GM12878 (cell line): ENCODE measurements at regions of chr1 and their contacts with region 1.

Region 1: GRCh38 chr1:33295450-33296081 is 25.3 kb downstream of the A3GALT2 start:
- DNase-seq: peak; percentile 64
- ATAC-seq: peak; percentile 97
- H3K4me3 ChIP-seq: no peak overlapping the region
- H3K27ac ChIP-seq: no peak overlapping the region
- H3K4me1 ChIP-seq: no peaks in the 10 kb centered on the region
- H3K27me3 ChIP-seq: no peaks in the 10 kb centered on the region
- CTCF ChIP-seq: peak; percentile 97 to 99 (median 98); a peak in 5 of 6 replicates
- EP300 ChIP-seq: no peak
- POLR2A ChIP-seq: no peak
- RAD21 ChIP-seq: peak; percentile 77

Region 2: GRCh38 chr1:33137800-33138199 is 157.8 kb before region 1 on chr1:
- CTCF ChIA-PET with region 1: interaction called, 53 read pairs
- POLR2A ChIA-PET with region 1: no interaction called
- RAD21 ChIA-PET with region 1: interaction called, 3 read pairs
- SMC1A ChIA-PET with region 1: interaction called, 5 read pairs
- in situ Hi-C with region 1: no loop called
- intact Hi-C with region 1: loop called (anchors 5 kb)
- DNase-seq: no peak
- ATAC-seq: peak; percentile 74
- H3K4me3 ChIP-seq: no peak overlapping the region
- H3K27ac ChIP-seq: no peak overlapping the region
- H3K4me1 ChIP-seq: no peaks in the 10 kb centered on the region
- H3K27me3 ChIP-seq: no peaks in the 10 kb centered on the region
- CTCF ChIP-seq: peak; percentile 48 to 68 (median 64)
- EP300 ChIP-seq: no peak
- POLR2A ChIP-seq: no peak
- RAD21 ChIP-seq: peak; percentile 54

Region 3: GRCh38 chr1:33334081-33334552 is 38.6 kb after region 1 on chr1:
- CTCF ChIA-PET with region 1: interaction called, 24 read pairs
- POLR2A ChIA-PET with region 1: interaction called, 5 read pairs
- RAD21 ChIA-PET with region 1: interaction called, 5 read pairs
- SMC1A ChIA-PET with region 1: interaction called, 3 read pairs
- in situ Hi-C with region 1: no loop called
- intact Hi-C with region 1: no loop called
- DNase-seq: no peak
- ATAC-seq: no peak
- H3K4me3 ChIP-seq: no peak overlapping the region
- H3K27ac ChIP-seq: no peak overlapping the region
- H3K4me1 ChIP-seq: peaks cover 3% of the 10 kb centered on the region
- H3K27me3 ChIP-seq: no peaks in the 10 kb centered on the region
- CTCF ChIP-seq: no peak
- EP300 ChIP-seq: no peak
- POLR2A ChIP-seq: no peak
- RAD21 ChIP-seq: no peak

Region 4: GRCh38 chr1:33358778-33359503 is 63.4 kb after region 1 on chr1:
- CTCF ChIA-PET with region 1: interaction called, 47 read pairs
- POLR2A ChIA-PET with region 1: no interaction called
- RAD21 ChIA-PET with region 1: interaction called, 21 read pairs
- SMC1A ChIA-PET with region 1: interaction called, 71 read pairs
- in situ Hi-C with region 1: no loop called
- intact Hi-C with region 1: no loop called
- DNase-seq: no peak
- ATAC-seq: no peak
- H3K4me3 ChIP-seq: no peak overlapping the region
- H3K27ac ChIP-seq: no peak overlapping the region
- H3K4me1 ChIP-seq: no peaks in the 10 kb centered on the region
- H3K27me3 ChIP-seq: no peaks in the 10 kb centered on the region
- CTCF ChIP-seq: no peak
- EP300 ChIP-seq: no peak
- POLR2A ChIP-seq: no peak
- RAD21 ChIP-seq: no peak

Region 5: GRCh38 chr1:33460947-33461629 is 165.5 kb after region 1 on chr1:
- CTCF ChIA-PET with region 1: interaction called, 239 read pairs
- POLR2A ChIA-PET with region 1: interaction called, 3 read pairs
- RAD21 ChIA-PET with region 1: interaction called, 11 read pairs
- SMC1A ChIA-PET with region 1: interaction called, 8 read pairs
- in situ Hi-C with region 1: loop called (anchors 5 kb)
- intact Hi-C with region 1: no loop called
- DNase-seq: peak; percentile 67
- ATAC-seq: peak; percentile 86
- H3K4me3 ChIP-seq: peak overlapping the region; percentile 49; the same call in 1 of the 2 replicates
- H3K27ac ChIP-seq: peak overlapping the region; percentile 73
- H3K4me1 ChIP-seq: peaks cover 51% of the 10 kb centered on the region
- H3K27me3 ChIP-seq: no peaks in the 10 kb centered on the region
- CTCF ChIP-seq: no peak
- EP300 ChIP-seq: peak; percentile 76 to 85; a peak in 3 of 4 replicates
- POLR2A ChIP-seq: no peak
- RAD21 ChIP-seq: no peak

Region 6: DNA sequence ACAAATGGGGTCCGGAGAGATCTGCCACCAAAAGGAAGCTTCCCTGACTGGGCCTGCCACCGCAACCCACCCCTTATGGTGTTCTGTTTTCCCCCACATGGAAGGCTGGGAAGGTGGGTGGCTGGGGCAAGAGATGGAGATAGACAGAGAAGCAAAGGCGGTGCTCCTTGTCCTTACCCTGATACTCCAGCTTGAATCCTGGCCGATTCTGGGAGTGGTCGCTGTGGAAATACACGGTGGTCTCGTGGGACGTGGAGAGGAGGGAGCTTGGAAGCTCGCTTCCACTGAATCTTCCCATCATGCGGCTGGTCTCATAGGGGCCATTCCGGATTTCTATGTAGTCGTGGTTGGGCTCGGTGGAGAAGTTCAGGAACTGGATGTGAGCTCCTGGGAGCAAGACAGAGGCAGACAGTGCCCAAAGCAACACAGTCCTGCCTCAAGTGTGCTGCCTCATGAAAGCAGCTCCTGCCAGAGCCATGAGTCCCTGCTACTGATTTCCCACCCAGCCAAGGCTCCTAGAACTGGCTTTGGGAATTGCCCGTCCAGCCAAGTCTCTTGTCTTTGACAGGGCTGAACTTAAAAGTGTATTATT is 315.4 kb after region 1 on chr1:
- CTCF ChIA-PET with region 1: interaction called, 19 read pairs
- POLR2A ChIA-PET with region 1: no interaction called
- RAD21 ChIA-PET with region 1: interaction called, 4 read pairs
- SMC1A ChIA-PET with region 1: interaction called, 10 read pairs
- in situ Hi-C with region 1: loop called (anchors 5 kb)
- intact Hi-C with region 1: loop called (anchors 2 kb)
- DNase-seq: no peak
- ATAC-seq: no peak
- H3K4me3 ChIP-seq: no peak overlapping the region
- H3K27ac ChIP-seq: no peak overlapping the region
- H3K4me1 ChIP-seq: no peaks in the 10 kb centered on the region
- H3K27me3 ChIP-seq: peaks cover 2 to 3% of the 10 kb centered on the region in 2 experiments; a peak in 2 of 4 replicates
- CTCF ChIP-seq: no peak
- EP300 ChIP-seq: no peak
- POLR2A ChIP-seq: no peak
- RAD21 ChIP-seq: no peak

Region 7: GRCh38 chr1:33852711-33853110 is 557.1 kb after region 1 on chr1:
- CTCF ChIA-PET with region 1: no interaction called
- POLR2A ChIA-PET with region 1: no interaction called
- RAD21 ChIA-PET with region 1: no interaction called
- SMC1A ChIA-PET with region 1: no interaction called
- in situ Hi-C with region 1: no loop called
- intact Hi-C with region 1: no loop called
- DNase-seq: no peak
- ATAC-seq: no peak
- H3K4me3 ChIP-seq: no peak overlapping the region
- H3K27ac ChIP-seq: no peak overlapping the region
- H3K4me1 ChIP-seq: no peaks in the 10 kb centered on the region
- H3K27me3 ChIP-seq: no peaks in the 10 kb centered on the region; a peak in 2 of 4 replicates
- CTCF ChIP-seq: no peak
- EP300 ChIP-seq: no peak
- POLR2A ChIP-seq: no peak
- RAD21 ChIP-seq: no peak